GM18951 (cell line): ENCODE measurements at regions of chr4 and their contacts with region 1.

Region 1: GRCh38 chr4:42396752-42397634 is at the start of gene SHISA3:
- POLR2A ChIP-seq: no peak

Region 2: DNA sequence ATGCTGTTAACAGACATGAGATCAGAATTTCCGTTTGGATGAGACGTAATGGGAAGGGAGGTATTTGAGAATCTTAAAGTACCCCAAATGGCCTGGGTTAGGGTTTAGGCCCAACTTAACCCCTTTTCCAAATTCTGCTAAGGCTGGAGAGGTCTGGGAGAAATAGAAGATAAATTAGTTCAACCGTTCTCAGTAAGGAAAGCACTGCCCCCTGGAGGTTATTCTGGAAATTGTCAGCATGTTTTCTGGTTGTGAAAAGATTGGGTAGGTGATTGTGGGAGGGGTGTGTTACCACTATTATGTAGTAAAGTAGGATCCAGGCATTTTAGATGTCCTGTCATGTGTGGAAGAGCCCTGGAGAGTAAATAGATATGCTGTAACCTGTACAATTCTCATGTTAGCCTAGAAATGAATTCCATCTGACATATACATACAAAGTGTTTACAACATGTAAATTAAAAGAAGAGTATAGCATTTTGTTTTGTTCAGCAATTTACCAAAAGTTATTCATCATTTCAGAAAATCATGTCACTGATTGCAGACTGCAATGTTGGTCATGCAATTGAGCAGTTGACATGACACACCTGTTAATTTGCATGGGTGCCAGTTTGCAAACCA is 468.7 kb after region 1 on chr4:
- in situ Hi-C with region 1: loop called (anchors 25 kb)
- POLR2A ChIP-seq: no peak